CD8-positive, alpha-beta T cell (primary cell): ENCODE measurements at regions of chr6 and their contacts with region 1.

Region 1: DNA sequence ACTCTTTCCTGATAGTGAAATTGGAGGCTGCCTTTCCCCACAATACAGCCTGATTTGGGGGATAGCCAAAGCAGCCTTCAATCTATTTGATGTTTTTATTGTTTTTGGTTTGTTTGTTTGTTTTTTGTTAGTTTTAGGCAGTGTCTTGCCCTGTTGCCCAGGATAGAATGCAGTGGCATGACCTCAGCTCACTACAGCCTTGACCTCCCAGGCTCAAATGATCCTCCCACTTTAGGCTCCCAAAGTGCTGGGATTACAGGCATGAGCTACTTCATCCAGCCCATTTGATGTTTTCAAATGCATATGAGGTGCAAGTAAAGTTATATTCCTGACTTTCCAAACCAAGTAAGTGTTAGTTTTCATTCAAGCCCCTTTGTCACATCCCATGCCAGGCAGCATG is 41.3 kb upstream of the SEC63 start:
- DNase-seq: no peak
- ATAC-seq: no peak
- H3K4me3 ChIP-seq: no peak overlapping the region
- H3K4me3 Mint-ChIP-seq: no peak overlapping the region
- H3K27ac ChIP-seq: no peak overlapping the region
- H3K27ac Mint-ChIP-seq: no peak overlapping the region
- H3K4me1 ChIP-seq: no peaks in the 10 kb centered on the region
- H3K4me1 Mint-ChIP-seq: no peaks in the 10 kb centered on the region
- H3K27me3 ChIP-seq: no peaks in the 10 kb centered on the region
- H3K27me3 Mint-ChIP-seq: no peaks in the 10 kb centered on the region
- CTCF ChIP-seq: no peak

Region 2: GRCh38 chr6:108767418-108768165 is 768.3 kb after region 1 on chr6:
- CTCF ChIA-PET with region 1: no interaction called
- POLR2A ChIA-PET with region 1: no interaction called
- intact Hi-C with region 1: loop called in 1 of 2 experiments (anchors 5 kb)
- DNase-seq: no peak
- ATAC-seq: no peak
- H3K4me3 ChIP-seq: no peak overlapping the region
- H3K4me3 Mint-ChIP-seq: no peak overlapping the region
- H3K27ac ChIP-seq: no peak overlapping the region
- H3K27ac Mint-ChIP-seq: no peak overlapping the region
- H3K4me1 ChIP-seq: no peaks in the 10 kb centered on the region
- H3K4me1 Mint-ChIP-seq: peaks cover 6% of the 10 kb centered on the region
- H3K27me3 ChIP-seq: no peaks in the 10 kb centered on the region
- H3K27me3 Mint-ChIP-seq: peaks cover 2% of the 10 kb centered on the region
- CTCF ChIP-seq: no peak